Naive thymus-derived CD8-positive, alpha-beta T cell (primary cell): ENCODE measurements at regions of chr11 and their contacts with region 1.

Region 1: GRCh38 chr11:66268283-66268951 is at the start of gene RAB1B:
- DNase-seq: peak; percentile 98 to 100 (median 100)
- ATAC-seq: peak; percentile 76 to 80
- H3K4me3 Mint-ChIP-seq: peak within 1 kb of the TSS; percentile 89 to 98 (median 94)
- H3K27ac Mint-ChIP-seq: peak within 1 kb of the TSS; percentile 95 to 100 (median 99)
- H3K4me1 Mint-ChIP-seq: peaks cover 23 to 50% (median 45%) of the 10 kb centered on the region in 4 donors
- H3K27me3 Mint-ChIP-seq: peaks cover 0 to 2% (median 0%) of the 10 kb centered on the region in 5 donors
- polyA plus RNA-seq, gene RAB1B: 13.1 to 16.1 (median 14.0) TPM

Region 2: DNA sequence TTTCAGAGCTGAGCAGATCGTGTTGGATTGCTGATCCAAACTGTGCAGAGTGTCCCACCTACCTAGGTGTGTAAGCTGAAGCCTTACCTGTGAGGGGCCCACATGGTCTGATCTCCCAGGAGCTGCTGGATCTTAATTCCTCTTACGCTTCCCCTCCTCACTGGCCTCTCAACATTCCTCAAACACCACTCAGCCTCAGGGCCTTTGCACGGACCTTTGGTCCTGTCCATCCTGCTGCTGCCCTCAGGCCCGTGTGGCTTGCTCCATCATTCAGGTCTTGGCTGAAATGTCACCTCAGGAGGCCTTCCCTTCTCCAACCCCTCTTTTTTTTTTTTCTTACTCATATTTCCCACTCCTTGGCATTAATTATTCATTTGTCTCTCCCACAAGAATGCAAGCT is 21.1 kb before region 1 on chr11:
- POLR2A ChIA-PET with region 1: no interaction called
- DNase-seq: no peak
- ATAC-seq: no peak
- H3K4me3 Mint-ChIP-seq: no peak overlapping the region
- H3K27ac Mint-ChIP-seq: peak overlapping the region in 8 of 10 donors; percentile 17 to 69 (median 49)
- H3K4me1 Mint-ChIP-seq: peaks cover 6 to 39% (median 16%) of the 10 kb centered on the region in 4 donors
- H3K27me3 Mint-ChIP-seq: no peaks in the 10 kb centered on the region

Region 3: GRCh38 chr11:66282468-66283386 is 14.3 kb after region 1 on chr11:
- POLR2A ChIA-PET with region 1: interaction called, 102 read pairs
- DNase-seq: peak; percentile 97 to 100 (median 100)
- ATAC-seq: peak; percentile 74 to 84
- H3K4me3 Mint-ChIP-seq: peak overlapping the region in 9 of 10 donors; percentile 15 to 78 (median 56)
- H3K27ac Mint-ChIP-seq: peak overlapping the region; percentile 35 to 97 (median 87)
- H3K4me1 Mint-ChIP-seq: peaks cover 7 to 52% (median 43%) of the 10 kb centered on the region in 4 donors
- H3K27me3 Mint-ChIP-seq: peaks cover 0 to 3% (median 0%) of the 10 kb centered on the region in 5 donors

Region 4: GRCh38 chr11:66288671-66289547 is 20.5 kb after region 1 on chr11 and contains the start of gene YIF1A:
- POLR2A ChIA-PET with region 1: interaction called, 102 read pairs
- DNase-seq: peak; percentile 94 to 99 (median 98)
- ATAC-seq: peak; percentile 90 to 94
- H3K4me3 Mint-ChIP-seq: peak within 1 kb of the TSS; percentile 84 to 96 (median 92)
- H3K27ac Mint-ChIP-seq: peak within 1 kb of the TSS; percentile 88 to 97 (median 94)
- H3K4me1 Mint-ChIP-seq: peaks cover 19 to 51% (median 45%) of the 10 kb centered on the region in 4 donors
- H3K27me3 Mint-ChIP-seq: peaks cover 2 to 20% (median 13%) of the 10 kb centered on the region in 5 donors
- polyA plus RNA-seq, gene YIF1A: 49.1 to 59.9 (median 53.9) TPM

Region 5: DNA sequence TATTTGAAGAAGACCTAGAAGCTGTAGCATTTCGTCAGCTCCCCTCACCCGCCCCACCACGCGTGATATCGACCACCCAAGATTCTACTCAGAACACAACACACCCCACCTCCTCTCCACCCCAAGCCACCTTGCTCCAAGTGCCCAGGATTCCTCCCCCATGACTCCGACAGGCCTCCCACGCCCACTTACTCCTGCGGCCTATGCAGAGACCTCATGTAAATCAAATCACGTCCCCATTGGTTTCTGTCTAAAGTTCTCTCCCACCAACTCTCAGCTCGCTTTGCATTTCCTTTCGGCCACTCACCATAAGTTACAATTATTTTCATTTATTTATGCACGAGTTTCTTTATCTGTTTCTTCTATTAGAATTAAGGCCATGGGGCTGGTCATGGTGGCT is 34.2 kb after region 1 on chr11:
- POLR2A ChIA-PET with region 1: no interaction called
- DNase-seq: no peak
- ATAC-seq: no peak
- H3K4me3 Mint-ChIP-seq: no peak overlapping the region
- H3K27ac Mint-ChIP-seq: no peak overlapping the region
- H3K4me1 Mint-ChIP-seq: no peaks in the 10 kb centered on the region
- H3K27me3 Mint-ChIP-seq: no peaks in the 10 kb centered on the region

Region 6: GRCh38 chr11:66643745-66644437 is 375.5 kb after region 1 on chr11:
- POLR2A ChIA-PET with region 1: no interaction called
- DNase-seq: no peak
- ATAC-seq: no peak
- H3K4me3 Mint-ChIP-seq: peak overlapping the region; percentile 89 to 99 (median 95)
- H3K27ac Mint-ChIP-seq: peak overlapping the region; percentile 7 to 89 (median 71)
- H3K4me1 Mint-ChIP-seq: peaks cover 61 to 93% (median 90%) of the 10 kb centered on the region in 4 donors
- H3K27me3 Mint-ChIP-seq: no peaks in the 10 kb centered on the region